ENCODE measurements at regions of chr6 and their contacts with region 1.

Region 1: GRCh38 chr6:136014454-136015421 is 163.2 kb downstream of the PDE7B start:
- DNase-seq: peak; percentile 60 to 96
- ATAC-seq: peak; percentile 93 to 95
- H3K4me3 ChIP-seq: peak overlapping the region; percentile 25; the same call in 1 of the 3 replicates
- H3K27ac ChIP-seq: peak overlapping the region; percentile 91 to 92
- H3K4me1 ChIP-seq: peaks cover 69% of the 10 kb centered on the region
- CTCF ChIP-seq: no peak
- EP300 ChIP-seq: peak; percentile 98 to 99
- POLR2A ChIP-seq: no peak
- RAD21 ChIP-seq: peak; percentile 13 to 64

Region 2: DNA sequence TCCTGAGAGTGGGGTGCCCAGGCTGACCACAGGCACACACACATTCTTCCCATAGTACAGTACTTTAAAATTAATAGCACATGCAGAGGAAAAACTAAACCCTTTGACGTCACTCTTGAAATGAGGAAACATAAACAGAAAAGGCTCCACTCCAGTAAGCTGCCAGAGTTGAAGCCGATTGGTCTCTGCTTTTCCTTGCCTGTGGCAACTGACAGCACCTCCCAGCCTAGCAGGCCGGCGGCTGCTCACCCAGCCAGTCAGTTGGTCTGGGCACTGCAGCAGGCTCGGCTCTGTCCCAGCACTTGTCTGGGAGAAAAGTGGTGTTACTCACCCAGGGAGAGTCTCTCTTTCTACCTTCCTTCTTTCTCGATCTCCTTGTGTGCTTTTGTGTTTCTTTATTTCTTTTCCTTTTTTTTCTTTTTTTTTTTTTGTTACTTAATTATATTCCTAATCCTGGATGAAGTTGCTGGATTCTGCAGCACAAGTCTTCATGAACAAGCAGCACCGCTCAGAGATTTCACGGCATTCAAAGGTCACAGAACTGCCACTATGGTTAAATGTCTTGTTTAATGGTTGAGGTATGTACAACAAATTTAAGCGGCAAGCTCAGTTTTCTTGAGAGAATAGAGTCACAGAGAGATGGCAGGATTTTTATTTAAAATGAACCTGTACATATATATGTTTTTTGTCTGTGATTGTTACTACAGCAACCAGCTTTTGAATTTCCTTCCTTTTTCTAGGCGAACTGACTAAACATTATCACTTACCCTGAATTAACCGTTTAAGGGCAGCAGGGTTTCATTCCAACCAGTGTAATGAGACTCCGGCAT is 163.1 kb before region 1 on chr6 and contains the start of gene PDE7B:
- CTCF ChIA-PET with region 1: no interaction called
- POLR2A ChIA-PET with region 1: interaction called, 10 read pairs
- DNase-seq: peak; percentile 73 to 91
- ATAC-seq: peak; percentile 98 to 99
- H3K4me3 ChIP-seq: peak within 1 kb of the TSS; percentile 58
- H3K27ac ChIP-seq: peak within 1 kb of the TSS; percentile 77 to 90
- H3K4me1 ChIP-seq: peaks cover 35% of the 10 kb centered on the region
- CTCF ChIP-seq: no peak
- EP300 ChIP-seq: no peak
- POLR2A ChIP-seq: peak; percentile 86
- RAD21 ChIP-seq: no peak; a peak in 1 of 5 replicates
- polyA plus RNA-seq, gene PDE7B: 13.8 and 15.7 TPM in 2 replicates

Region 3: GRCh38 chr6:135935941-135936601 is 78.7 kb before region 1 on chr6:
- CTCF ChIA-PET with region 1: interaction called, 3 read pairs
- POLR2A ChIA-PET with region 1: interaction called, 13 read pairs
- DNase-seq: peak; percentile 27 to 78
- ATAC-seq: peak; percentile 88 to 91
- H3K4me3 ChIP-seq: no peak overlapping the region; the same call in 2 of the 3 replicates
- H3K27ac ChIP-seq: peak overlapping the region; percentile 92 to 96
- H3K4me1 ChIP-seq: peaks cover 62% of the 10 kb centered on the region
- CTCF ChIP-seq: no peak
- EP300 ChIP-seq: peak; percentile 75; a peak in 4 of 5 replicates
- POLR2A ChIP-seq: no peak
- RAD21 ChIP-seq: peak in 1 of 2 experiments; percentile 38; a peak in 3 of 5 replicates

Measured in A549 (cell line).